ENCODE measurements at regions of chr17 and their contacts with region 1.

Region 1: GRCh38 chr17:51537996-51538550 is 277.7 kb downstream of the UTP18 start:
- DNase-seq: no peak
- ATAC-seq: no peak
- H3K4me3 ChIP-seq: no peak overlapping the region
- H3K27ac ChIP-seq: no peak overlapping the region
- H3K4me1 ChIP-seq: no peaks in the 10 kb centered on the region
- H3K27me3 ChIP-seq: peaks cover 0 to 7% (median 0%) of the 10 kb centered on the region in 7 donors
- CTCF ChIP-seq: no peak

Region 2: GRCh38 chr17:51298508-51299371 is 239.3 kb before region 1 on chr17:
- intact Hi-C with region 1: loop called in 3 of 10 experiments (anchors 5 to 10 kb)
- DNase-seq: no peak
- ATAC-seq: no peak
- H3K4me3 ChIP-seq: no peak overlapping the region
- H3K27ac ChIP-seq: no peak overlapping the region
- H3K4me1 ChIP-seq: no peaks in the 10 kb centered on the region
- H3K27me3 ChIP-seq: no peaks in the 10 kb centered on the region
- CTCF ChIP-seq: peak; percentile 23 to 74 (median 60)

Region 3: DNA sequence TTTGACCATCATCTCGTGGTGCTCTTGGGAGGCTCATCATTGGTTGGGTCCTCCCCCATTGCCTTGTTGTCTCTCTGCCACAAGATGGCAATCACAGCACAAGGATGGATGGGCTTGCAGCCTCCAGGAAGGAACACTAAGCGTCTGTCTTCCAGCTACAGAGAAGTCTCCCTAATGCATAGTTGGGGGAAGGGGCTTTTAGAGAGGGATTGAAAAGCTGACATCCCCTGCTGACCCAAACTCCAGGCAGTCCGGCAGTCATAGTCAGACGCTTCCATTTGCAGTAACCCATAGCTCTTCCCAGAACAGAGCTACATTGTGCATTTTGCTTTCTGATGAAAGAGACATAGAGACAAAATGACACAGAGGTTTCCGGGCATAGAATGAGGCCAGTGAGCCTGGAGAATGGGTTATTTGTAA is 166.3 kb before region 1 on chr17:
- intact Hi-C with region 1: loop called in 1 of 10 experiments (anchors 5 kb)
- DNase-seq: peak in 1 of 2 donors; percentile 15
- ATAC-seq: peak in 6 of 8 donors; percentile 68 to 84 (median 73)
- H3K4me3 ChIP-seq: no peak overlapping the region
- H3K27ac ChIP-seq: no peak overlapping the region
- H3K4me1 ChIP-seq: peaks cover 0 to 18% (median 0%) of the 10 kb centered on the region in 9 donors
- H3K27me3 ChIP-seq: peaks cover 0 to 25% (median 11%) of the 10 kb centered on the region in 7 donors
- CTCF ChIP-seq: peak in 8 of 9 donors; percentile 11 to 63 (median 49)

Region 4: DNA sequence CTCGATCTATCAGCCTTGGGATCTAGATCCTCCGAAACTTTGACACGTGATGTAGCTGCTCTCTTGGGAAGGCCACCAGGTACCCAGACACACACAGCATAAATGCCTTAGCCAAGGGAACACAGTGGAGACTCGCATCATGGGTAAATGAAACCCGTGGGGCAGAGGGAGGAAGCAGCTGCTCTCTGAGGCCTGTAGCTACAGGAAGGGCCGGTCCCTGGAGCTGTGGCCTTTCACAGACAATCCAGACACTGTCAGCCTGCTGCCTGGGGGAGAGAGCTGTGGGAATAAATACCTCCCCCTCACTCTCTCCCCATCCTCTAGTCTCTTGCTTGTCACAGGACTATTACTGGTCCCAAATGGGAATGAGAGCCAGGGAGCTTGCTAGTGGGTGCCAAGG is 73.5 kb after region 1 on chr17:
- intact Hi-C with region 1: no loop called
- DNase-seq: peak; percentile 9 to 26
- ATAC-seq: peak; percentile 29 to 94 (median 78)
- H3K4me3 ChIP-seq: no peak overlapping the region
- H3K27ac ChIP-seq: peak overlapping the region in 4 of 10 donors; percentile 14 to 53 (median 32)
- H3K4me1 ChIP-seq: peaks cover 0 to 34% (median 6%) of the 10 kb centered on the region in 9 donors
- H3K27me3 ChIP-seq: no peaks in the 10 kb centered on the region
- CTCF ChIP-seq: no peak

Region 5: DNA sequence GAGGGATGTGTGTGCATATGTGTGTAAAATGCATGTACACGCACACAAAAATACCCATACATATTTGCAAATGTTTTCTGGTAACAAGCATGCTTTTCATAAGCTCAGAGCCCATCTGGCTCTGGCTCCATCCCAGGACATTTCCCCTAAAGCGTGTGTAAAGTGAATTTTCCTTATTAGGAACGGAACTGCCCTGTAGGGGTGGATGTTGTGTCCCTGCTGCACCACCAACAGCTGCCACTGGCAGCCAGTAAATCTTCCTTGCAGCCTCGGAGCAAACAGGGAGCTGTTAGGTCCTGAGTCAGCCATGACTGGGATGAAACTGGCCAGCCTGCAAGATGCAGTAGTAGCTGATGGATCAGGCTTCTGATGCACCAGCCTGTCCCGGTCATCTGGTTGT is 115.8 kb after region 1 on chr17:
- intact Hi-C with region 1: no loop called
- DNase-seq: no peak
- ATAC-seq: no peak
- H3K4me3 ChIP-seq: no peak overlapping the region
- H3K27ac ChIP-seq: no peak overlapping the region
- H3K4me1 ChIP-seq: no peaks in the 10 kb centered on the region
- H3K27me3 ChIP-seq: peaks cover 0 to 24% (median 8%) of the 10 kb centered on the region in 7 donors
- CTCF ChIP-seq: no peak

Measured in heart right ventricle (tissue), 16 donors.